Vagina (tissue), 2 donors: ENCODE measurements at regions of chr11 and their contacts with region 1.

Region 1: GRCh38 chr11:12693479-12694181 is 19.4 kb downstream of the TEAD1 start:
- DNase-seq: peak in 1 of 2 donors; percentile 91
- H3K4me3 ChIP-seq: peak overlapping the region; percentile 17 to 32
- H3K27ac ChIP-seq: peak overlapping the region; percentile 90
- H3K4me1 ChIP-seq: peaks cover 76% of the 10 kb centered on the region
- H3K27me3 ChIP-seq: no peaks in the 10 kb centered on the region
- CTCF ChIP-seq: no peak
- POLR2A ChIP-seq: peak in 1 of 2 donors; percentile 18

Region 2: GRCh38 chr11:12397931-12398334 is 295.7 kb before region 1 on chr11:
- intact Hi-C with region 1: no loop called
- DNase-seq: peak in 1 of 2 donors; percentile 94
- H3K4me3 ChIP-seq: no peak overlapping the region
- H3K27ac ChIP-seq: peak overlapping the region; percentile 79
- H3K4me1 ChIP-seq: peaks cover 44% of the 10 kb centered on the region
- H3K27me3 ChIP-seq: no peaks in the 10 kb centered on the region
- CTCF ChIP-seq: no peak
- POLR2A ChIP-seq: no peak

Region 3: GRCh38 chr11:12581923-12582322 is 111.7 kb before region 1 on chr11:
- intact Hi-C with region 1: no loop called
- DNase-seq: no peak
- H3K4me3 ChIP-seq: no peak overlapping the region
- H3K27ac ChIP-seq: no peak overlapping the region
- H3K4me1 ChIP-seq: peaks cover 13% of the 10 kb centered on the region
- H3K27me3 ChIP-seq: no peaks in the 10 kb centered on the region
- CTCF ChIP-seq: no peak
- POLR2A ChIP-seq: no peak

Region 4: GRCh38 chr11:12679471-12679870 is 14.2 kb before region 1 on chr11:
- intact Hi-C with region 1: loop called (anchors 2 kb)
- DNase-seq: no peak
- H3K4me3 ChIP-seq: no peak overlapping the region
- H3K27ac ChIP-seq: peak overlapping the region; percentile 93
- H3K4me1 ChIP-seq: peaks cover 72% of the 10 kb centered on the region
- H3K27me3 ChIP-seq: no peaks in the 10 kb centered on the region
- CTCF ChIP-seq: no peak
- POLR2A ChIP-seq: no peak